ENCODE measurements at regions of chr2 and their contacts with region 1.

Region 1: DNA sequence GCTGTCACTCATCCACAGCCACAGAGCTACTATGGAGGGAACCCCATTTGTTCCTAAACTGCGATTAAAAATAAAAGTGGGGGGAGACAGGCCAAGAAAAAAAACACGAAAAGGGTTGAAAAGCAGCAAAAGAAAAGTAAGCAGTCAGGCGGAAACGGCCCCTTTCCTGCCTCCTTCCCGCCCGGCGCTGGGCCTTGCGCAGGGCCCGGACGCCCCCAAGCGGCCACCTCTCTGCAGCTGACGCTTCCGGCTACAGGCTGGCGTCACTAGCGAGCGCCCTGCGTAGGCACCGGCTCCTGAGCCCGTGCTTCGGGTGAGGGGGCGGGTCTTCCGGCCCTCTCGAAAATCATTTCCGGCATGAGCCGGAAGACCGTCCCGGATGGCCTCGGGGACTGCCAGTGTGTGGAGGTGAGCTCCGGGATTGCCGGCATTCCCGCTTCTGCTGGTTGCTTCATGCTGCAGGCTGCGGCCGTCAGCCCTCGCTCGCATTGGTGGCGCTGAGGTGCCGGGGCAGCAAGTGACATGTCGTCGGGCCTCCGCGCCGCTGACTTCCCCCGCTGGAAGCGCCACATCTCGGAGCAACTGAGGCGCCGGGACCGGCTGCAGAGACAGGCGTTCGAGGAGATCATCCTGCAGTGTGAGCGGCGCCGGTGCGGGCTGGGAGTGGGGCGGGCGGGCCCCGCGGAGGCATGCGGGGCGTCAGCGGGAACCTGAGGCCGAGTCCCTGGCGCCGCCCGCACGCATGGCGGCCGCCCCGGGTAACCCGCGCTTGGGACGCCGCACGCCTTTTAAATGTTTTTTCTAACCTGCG is at the start of gene ATG16L1:
- DNase-seq: peak; percentile 96
- H3K4me3 ChIP-seq: peak within 1 kb of the TSS; percentile 72 to 99 (median 94)
- H3K27ac ChIP-seq: peak within 1 kb of the TSS; percentile 77
- H3K4me1 ChIP-seq: peaks cover 28% of the 10 kb centered on the region
- H3K27me3 ChIP-seq: no peaks in the 10 kb centered on the region
- CTCF ChIP-seq: peak; percentile 99
- POLR2A ChIP-seq: peak; percentile 89
- total RNA-seq, gene ATG16L1: 29.8 and 30.2 TPM in 2 replicates

Region 2: GRCh38 chr2:232611551-232612218 is 639.8 kb before region 1 on chr2:
- CTCF ChIA-PET with region 1: interaction called, 7 read pairs
- POLR2A ChIA-PET with region 1: no interaction called
- dilution Hi-C with region 1: no loop called
- intact Hi-C with region 1: loop called (anchors 1 kb)
- DNase-seq: peak; percentile 19
- H3K4me3 ChIP-seq: no peak overlapping the region
- H3K27ac ChIP-seq: no peak overlapping the region
- H3K4me1 ChIP-seq: no peaks in the 10 kb centered on the region
- H3K27me3 ChIP-seq: no peaks in the 10 kb centered on the region
- CTCF ChIP-seq: peak; percentile 86 to 88
- POLR2A ChIP-seq: no peak

Region 3: DNA sequence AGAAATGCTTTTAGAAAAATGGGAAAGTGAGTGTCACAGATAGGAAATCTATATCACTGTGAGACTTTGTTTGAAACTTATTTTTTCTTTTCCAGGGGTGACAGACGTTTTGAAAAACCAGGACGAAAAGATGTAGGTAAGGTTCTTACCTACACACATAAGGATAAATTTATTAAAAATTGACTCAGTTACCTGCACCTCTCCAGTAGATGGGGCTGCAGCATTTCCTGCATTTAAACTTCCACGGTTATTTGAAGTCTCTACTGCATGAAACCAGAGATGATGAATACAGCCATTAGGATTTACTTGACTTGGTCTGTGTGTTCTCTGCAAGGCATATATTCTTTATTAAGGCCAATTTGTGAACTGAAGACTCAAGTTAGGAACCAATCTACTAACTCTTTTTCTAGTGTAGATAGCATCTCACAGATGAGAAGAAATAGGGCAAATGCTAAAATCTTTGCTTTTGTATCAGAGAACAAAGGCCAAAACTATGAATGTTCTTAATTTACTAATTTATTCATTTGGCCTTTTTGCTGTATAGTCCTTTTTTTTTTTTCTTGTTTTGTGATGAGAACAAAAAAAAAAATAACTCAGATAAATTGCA is 490.1 kb before region 1 on chr2:
- CTCF ChIA-PET with region 1: interaction called, 4 read pairs
- POLR2A ChIA-PET with region 1: no interaction called
- dilution Hi-C with region 1: no loop called
- intact Hi-C with region 1: loop called (anchors 1 kb)
- DNase-seq: peak; percentile 55
- H3K4me3 ChIP-seq: no peak overlapping the region
- H3K27ac ChIP-seq: no peak overlapping the region
- H3K4me1 ChIP-seq: no peaks in the 10 kb centered on the region
- H3K27me3 ChIP-seq: no peaks in the 10 kb centered on the region
- CTCF ChIP-seq: peak; percentile 35 to 43
- POLR2A ChIP-seq: no peak

Region 4: DNA sequence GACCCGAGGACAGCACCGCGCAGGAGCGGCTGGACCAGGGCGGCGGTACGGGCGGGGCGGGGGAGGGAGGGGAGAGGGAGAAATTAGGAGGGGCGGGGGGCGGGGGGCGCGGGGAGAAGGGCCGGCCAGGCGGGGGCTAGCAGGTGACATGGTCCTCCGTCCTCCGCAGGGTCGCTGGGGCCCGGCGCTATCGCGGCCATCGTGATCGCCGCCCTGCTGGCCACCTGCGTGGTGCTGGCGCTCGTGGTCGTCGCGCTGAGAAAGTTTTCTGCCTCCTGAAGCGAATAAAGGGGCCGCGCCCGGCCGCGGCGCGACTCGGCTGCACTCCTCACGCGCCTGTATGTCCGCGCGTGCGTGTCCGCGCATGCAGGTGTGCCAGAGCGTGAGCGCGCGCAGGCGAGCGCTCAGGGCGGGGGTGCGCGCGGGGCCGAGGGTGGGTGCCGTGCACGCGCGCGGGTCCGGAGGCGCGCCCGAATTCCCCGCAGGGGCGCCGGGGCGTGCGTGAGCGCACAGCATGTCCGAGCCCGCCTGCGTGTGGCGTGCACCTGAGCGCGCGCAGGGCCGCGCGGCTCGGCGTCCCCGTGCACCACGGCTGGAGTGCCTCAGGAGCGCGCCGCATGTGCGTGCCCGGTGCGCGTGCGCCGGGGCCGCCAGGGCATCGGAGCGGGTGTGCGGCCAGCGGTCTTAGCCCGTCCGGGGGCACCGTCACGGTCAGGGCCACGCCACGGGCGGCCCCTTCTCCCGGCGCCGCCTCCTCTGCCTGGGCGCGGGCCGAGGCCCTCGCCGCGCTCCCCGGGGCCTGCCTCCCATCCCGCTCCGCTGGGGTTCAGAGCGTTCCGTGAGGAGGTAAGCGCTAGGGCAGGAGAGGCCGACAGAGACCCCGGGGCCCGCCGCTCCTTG is 375.2 kb before region 1 on chr2:
- CTCF ChIA-PET with region 1: no interaction called
- POLR2A ChIA-PET with region 1: no interaction called
- dilution Hi-C with region 1: no loop called
- intact Hi-C with region 1: loop called (anchors 1 kb)
- DNase-seq: no peak
- H3K4me3 ChIP-seq: peak overlapping the region in 2 of 3 experiments; percentile 29 to 45
- H3K27ac ChIP-seq: no peak overlapping the region
- H3K4me1 ChIP-seq: no peaks in the 10 kb centered on the region
- H3K27me3 ChIP-seq: no peaks in the 10 kb centered on the region
- CTCF ChIP-seq: peak; percentile 26 to 46
- POLR2A ChIP-seq: no peak

Region 5: GRCh38 chr2:232979871-232980461 is 271.5 kb before region 1 on chr2:
- CTCF ChIA-PET with region 1: no interaction called
- POLR2A ChIA-PET with region 1: no interaction called
- dilution Hi-C with region 1: no loop called
- intact Hi-C with region 1: loop called (anchors 10 kb)
- DNase-seq: no peak
- H3K4me3 ChIP-seq: no peak overlapping the region
- H3K27ac ChIP-seq: no peak overlapping the region
- H3K4me1 ChIP-seq: no peaks in the 10 kb centered on the region
- H3K27me3 ChIP-seq: peaks cover 0 to 2% of the 10 kb centered on the region in 2 experiments
- CTCF ChIP-seq: no peak
- POLR2A ChIP-seq: no peak

Region 6: GRCh38 chr2:233053928-233054784 is 197.4 kb before region 1 on chr2:
- CTCF ChIA-PET with region 1: interaction called, 6 read pairs
- POLR2A ChIA-PET with region 1: no interaction called
- dilution Hi-C with region 1: no loop called
- intact Hi-C with region 1: loop called (anchors 2 kb)
- DNase-seq: peak; percentile 34
- H3K4me3 ChIP-seq: no peak overlapping the region
- H3K27ac ChIP-seq: no peak overlapping the region
- H3K4me1 ChIP-seq: peaks cover 4% of the 10 kb centered on the region
- H3K27me3 ChIP-seq: no peaks in the 10 kb centered on the region
- CTCF ChIP-seq: peak; percentile 95 to 98
- POLR2A ChIP-seq: no peak

Region 7: GRCh38 chr2:233084488-233084887 is 167.0 kb before region 1 on chr2:
- CTCF ChIA-PET with region 1: no interaction called
- POLR2A ChIA-PET with region 1: no interaction called
- dilution Hi-C with region 1: no loop called
- intact Hi-C with region 1: loop called (anchors 1 kb)
- DNase-seq: peak; percentile 96
- H3K4me3 ChIP-seq: peak overlapping the region in 1 of 3 experiments; percentile 3
- H3K27ac ChIP-seq: peak overlapping the region; percentile 94
- H3K4me1 ChIP-seq: peaks cover 40% of the 10 kb centered on the region
- H3K27me3 ChIP-seq: no peaks in the 10 kb centered on the region
- CTCF ChIP-seq: no peak
- POLR2A ChIP-seq: peak; percentile 42

Measured in endothelial cell of umbilical vein (primary cell).